ENCODE measurements at regions of chr9 and their contacts with region 1.

Region 1: GRCh38 chr9:121321016-121321503 is 49.0 kb downstream of the STOM start:
- DNase-seq: peak; percentile 48 to 78 (median 77)
- H3K4me3 ChIP-seq: peak overlapping the region in 2 of 7 experiments; percentile 48 to 58
- H3K27ac ChIP-seq: no peak overlapping the region
- H3K4me1 ChIP-seq: peaks cover 0 to 18% (median 12%) of the 10 kb centered on the region in 4 experiments
- H3K27me3 ChIP-seq: no peaks in the 10 kb centered on the region

Region 2: DNA sequence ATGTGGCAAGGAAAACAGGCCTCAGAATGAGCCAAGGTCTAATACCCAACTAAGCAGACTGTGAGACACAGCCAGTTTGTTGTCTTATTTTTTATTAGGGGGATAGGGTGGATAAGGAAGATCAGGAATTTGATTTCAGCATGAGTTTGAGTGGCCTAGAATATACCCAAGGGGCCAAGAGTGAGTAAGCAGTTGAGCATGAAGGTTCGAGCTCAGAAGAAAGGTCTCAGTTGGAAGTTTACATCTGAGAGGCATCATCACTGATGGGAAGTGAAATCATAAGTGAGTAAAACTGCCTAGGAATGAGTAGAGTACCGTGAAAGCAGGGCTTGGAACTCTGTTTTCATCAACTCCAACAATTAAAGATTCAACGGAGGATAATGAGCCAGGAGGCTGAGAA is 490.9 kb before region 1 on chr9:
- CTCF ChIA-PET with region 1: no interaction called
- POLR2A ChIA-PET with region 1: no interaction called
- DNase-seq: no peak
- H3K4me3 ChIP-seq: no peak overlapping the region
- H3K27ac ChIP-seq: no peak overlapping the region
- H3K4me1 ChIP-seq: no peaks in the 10 kb centered on the region
- H3K27me3 ChIP-seq: no peaks in the 10 kb centered on the region

Region 3: GRCh38 chr9:121267689-121268597 is 53.1 kb before region 1 on chr9 and contains the start of gene GSN:
- CTCF ChIA-PET with region 1: interaction called, 17 read pairs
- POLR2A ChIA-PET with region 1: no interaction called
- DNase-seq: peak in 2 of 3 donors; percentile 51 to 76
- H3K4me3 ChIP-seq: peak within 1 kb of the TSS; percentile 70 to 85 (median 78)
- H3K27ac ChIP-seq: peak within 1 kb of the TSS in 1 of 2 experiments; percentile 4
- H3K4me1 ChIP-seq: peaks cover 23 to 64% (median 56%) of the 10 kb centered on the region in 4 experiments
- H3K27me3 ChIP-seq: no peaks in the 10 kb centered on the region

Region 4: GRCh38 chr9:121286973-121287741 is 33.9 kb before region 1 on chr9:
- CTCF ChIA-PET with region 1: interaction called, 19 read pairs
- POLR2A ChIA-PET with region 1: no interaction called
- DNase-seq: peak; percentile 74 to 81 (median 81)
- H3K4me3 ChIP-seq: peak overlapping the region in 4 of 7 experiments; percentile 14 to 61 (median 34)
- H3K27ac ChIP-seq: peak overlapping the region in 1 of 2 experiments; percentile 79
- H3K4me1 ChIP-seq: peaks cover 14 to 81% (median 80%) of the 10 kb centered on the region in 4 experiments
- H3K27me3 ChIP-seq: no peaks in the 10 kb centered on the region

Region 5: GRCh38 chr9:121350993-121351561 is 30.0 kb after region 1 on chr9:
- CTCF ChIA-PET with region 1: interaction called, 27 read pairs
- POLR2A ChIA-PET with region 1: no interaction called
- DNase-seq: peak; percentile 76 to 88 (median 88)
- H3K4me3 ChIP-seq: peak overlapping the region in 3 of 7 experiments; percentile 15 to 55 (median 32)
- H3K27ac ChIP-seq: peak overlapping the region in 1 of 2 experiments; percentile 57
- H3K4me1 ChIP-seq: peaks cover 3 to 52% (median 24%) of the 10 kb centered on the region in 4 experiments
- H3K27me3 ChIP-seq: no peaks in the 10 kb centered on the region

Region 6: DNA sequence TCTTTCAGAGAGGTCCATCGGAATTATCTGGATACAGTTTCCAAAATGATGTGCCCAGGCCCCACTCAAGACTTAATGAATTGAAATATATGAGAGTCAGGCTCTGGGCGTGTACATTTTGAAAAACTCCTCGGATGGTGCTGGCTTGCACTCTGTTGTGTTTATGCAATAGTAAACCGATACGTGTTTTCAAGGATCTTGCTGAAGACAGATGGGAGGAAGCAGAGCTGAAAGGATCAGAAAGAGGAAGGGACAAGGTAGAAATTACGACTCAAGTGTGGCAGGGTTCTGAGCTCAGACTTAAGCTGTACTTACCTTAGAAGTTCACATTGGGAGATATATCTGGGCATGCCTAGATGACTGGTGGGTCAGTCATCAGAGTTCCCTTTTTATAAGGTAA is 62.7 kb after region 1 on chr9:
- CTCF ChIA-PET with region 1: interaction called, 158 read pairs
- POLR2A ChIA-PET with region 1: no interaction called
- DNase-seq: peak in 2 of 3 donors; percentile 51 to 59
- H3K4me3 ChIP-seq: peak overlapping the region in 1 of 7 experiments; percentile 20
- H3K27ac ChIP-seq: no peak overlapping the region
- H3K4me1 ChIP-seq: peaks cover 0 to 20% (median 2%) of the 10 kb centered on the region in 4 experiments
- H3K27me3 ChIP-seq: no peaks in the 10 kb centered on the region

Measured in common myeloid progenitor, CD34-positive (primary cell).